MCF 10A (cell line): ENCODE measurements at regions of chr3 and their contacts with region 1.

Region 1: DNA sequence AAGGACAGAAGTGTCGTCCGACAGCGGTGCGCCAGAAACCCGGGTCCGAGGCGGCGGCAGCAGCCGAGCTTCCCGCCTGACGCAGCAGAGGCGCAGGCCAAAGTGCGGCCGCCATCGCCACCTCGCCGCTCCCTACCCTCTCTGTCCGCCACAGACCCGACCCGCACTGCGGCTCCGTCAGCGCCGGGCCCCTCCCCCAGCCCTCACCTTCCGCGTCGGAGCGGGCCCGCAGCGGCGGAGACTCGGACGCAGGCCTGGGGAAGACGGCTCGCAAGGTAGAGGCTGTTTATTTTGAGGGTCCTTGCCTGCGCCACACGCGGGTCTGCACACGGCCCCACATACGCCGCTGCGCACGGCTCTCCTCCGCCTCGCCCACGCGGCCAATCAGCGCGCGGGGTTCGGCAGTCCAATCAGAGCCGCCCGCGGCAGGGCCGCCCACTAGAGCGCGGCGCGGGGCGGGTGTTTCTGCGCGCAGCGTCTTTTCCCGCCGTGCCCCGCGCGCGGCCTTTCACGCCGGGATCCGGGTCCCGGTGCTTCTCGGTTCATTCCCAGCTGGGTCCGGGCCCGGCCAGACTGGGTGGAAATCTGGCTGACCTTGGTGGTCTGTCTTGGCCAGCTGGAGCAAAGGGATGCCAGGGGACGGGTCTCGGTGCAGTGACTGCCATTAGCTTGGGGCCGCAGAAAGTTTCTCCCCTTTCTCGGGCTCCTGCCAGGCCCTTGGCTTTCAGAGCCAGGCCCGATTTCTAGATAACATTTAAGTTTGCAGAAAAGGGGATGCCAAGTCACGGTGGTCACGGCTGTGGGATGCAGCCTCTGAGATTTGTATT is at the start of gene CNBP:
- DNase-seq: peak; percentile 95
- H3K4me3 Mint-ChIP-seq: peak within 1 kb of the TSS; percentile 84
- H3K27ac Mint-ChIP-seq: peak within 1 kb of the TSS; percentile 96
- H3K4me1 Mint-ChIP-seq: peaks cover 13% of the 10 kb centered on the region
- H3K27me3 Mint-ChIP-seq: no peaks in the 10 kb centered on the region
- CTCF ChIP-seq: no peak
- total RNA-seq, gene CNBP: 519 and 557 TPM in 2 replicates

Region 2: DNA sequence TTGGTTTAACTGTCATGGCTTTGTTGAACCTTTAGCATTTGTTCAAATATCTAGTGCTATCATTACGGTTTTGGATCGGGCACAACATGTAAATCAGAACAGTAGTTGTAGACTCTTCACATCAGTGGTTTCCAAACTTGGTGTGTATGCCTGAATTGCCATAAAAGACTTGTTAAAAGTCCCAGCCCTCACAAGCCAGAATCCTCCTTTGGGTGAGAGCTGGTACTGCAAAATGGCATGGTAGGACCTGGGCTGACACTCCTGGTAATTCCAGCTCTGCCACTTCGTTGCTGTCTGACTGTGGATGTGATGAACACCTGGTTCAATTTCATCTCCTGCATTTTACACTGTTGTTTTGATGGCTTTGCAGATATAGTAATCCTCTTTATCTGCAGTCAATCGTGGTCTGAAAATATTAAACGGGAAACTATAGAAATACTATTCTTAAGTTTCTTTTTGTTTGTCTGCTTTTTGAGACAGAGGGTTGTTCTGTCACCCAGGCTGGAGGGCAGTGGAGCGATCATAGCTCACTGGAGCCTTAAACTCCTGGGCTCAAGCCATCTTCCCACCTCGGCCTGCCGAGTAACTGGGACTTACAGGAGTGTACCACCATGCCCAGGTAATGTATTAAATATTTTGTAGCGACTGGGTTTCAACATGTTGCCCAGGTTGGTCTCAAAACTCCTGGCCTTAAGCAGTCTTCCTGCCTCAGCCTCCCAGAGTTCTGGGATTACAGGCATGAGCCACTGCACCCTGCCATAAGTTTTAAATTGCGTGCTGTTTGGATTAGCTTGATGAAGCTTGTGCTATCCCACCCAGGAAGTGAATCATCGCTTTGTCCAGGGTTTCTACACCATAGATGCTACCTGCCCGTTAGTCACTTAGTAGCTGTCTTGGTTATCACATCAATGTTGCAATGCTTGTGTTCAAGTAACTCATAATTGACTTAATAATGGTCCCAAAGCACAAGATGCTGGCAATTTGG is 396.2 kb before region 1 on chr3:
- CTCF ChIA-PET with region 1: no interaction called
- POLR2A ChIA-PET with region 1: no interaction called
- intact Hi-C with region 1: no loop called
- DNase-seq: peak; percentile 94
- H3K4me3 Mint-ChIP-seq: peak overlapping the region; percentile 5
- H3K27ac Mint-ChIP-seq: peak overlapping the region; percentile 80
- H3K4me1 Mint-ChIP-seq: peaks cover 42% of the 10 kb centered on the region
- H3K27me3 Mint-ChIP-seq: no peaks in the 10 kb centered on the region
- CTCF ChIP-seq: peak; percentile 36

Region 3: DNA sequence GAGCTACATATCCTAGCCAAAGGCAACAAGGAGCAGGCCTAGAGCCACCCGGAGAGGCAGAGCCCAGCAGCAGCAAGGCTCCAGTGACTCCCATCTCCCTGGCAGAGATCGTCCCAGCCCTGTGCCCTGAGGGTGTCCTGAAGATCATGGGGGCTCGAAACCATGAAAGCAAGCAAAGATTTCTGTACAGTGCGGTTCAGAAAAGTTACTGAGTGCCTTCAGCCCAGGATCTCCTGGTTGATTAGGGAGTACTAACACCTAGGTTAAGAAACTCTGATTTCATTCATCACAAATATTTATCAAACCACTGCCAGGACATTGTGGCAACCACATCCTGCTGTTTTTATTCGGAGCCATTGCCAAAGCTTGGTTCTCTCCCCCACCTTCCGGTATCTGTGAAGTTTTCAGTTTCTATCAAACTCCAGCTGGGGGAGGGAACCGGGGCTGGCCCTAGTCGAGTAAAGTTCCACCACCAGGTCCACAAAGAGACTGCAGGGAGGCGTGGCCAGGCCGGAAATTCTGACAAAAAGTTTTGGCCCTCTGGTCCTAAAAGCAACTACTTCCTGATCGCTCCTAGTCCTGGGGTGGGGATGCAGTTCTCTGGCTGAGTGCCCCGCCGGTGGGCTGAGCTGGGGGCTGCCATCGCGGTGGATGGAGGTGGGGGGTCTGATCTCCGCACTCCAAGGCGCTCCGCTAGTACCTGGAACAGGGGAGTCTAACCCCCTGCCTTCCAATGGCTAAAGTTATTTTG is 63.4 kb before region 1 on chr3:
- CTCF ChIA-PET with region 1: no interaction called
- POLR2A ChIA-PET with region 1: interaction called, 10 read pairs
- intact Hi-C with region 1: no loop called
- DNase-seq: peak; percentile 98
- H3K4me3 Mint-ChIP-seq: peak overlapping the region; percentile 77
- H3K27ac Mint-ChIP-seq: peak overlapping the region; percentile 82
- H3K4me1 Mint-ChIP-seq: peaks cover 26% of the 10 kb centered on the region
- H3K27me3 Mint-ChIP-seq: no peaks in the 10 kb centered on the region
- CTCF ChIP-seq: no peak

Region 4: DNA sequence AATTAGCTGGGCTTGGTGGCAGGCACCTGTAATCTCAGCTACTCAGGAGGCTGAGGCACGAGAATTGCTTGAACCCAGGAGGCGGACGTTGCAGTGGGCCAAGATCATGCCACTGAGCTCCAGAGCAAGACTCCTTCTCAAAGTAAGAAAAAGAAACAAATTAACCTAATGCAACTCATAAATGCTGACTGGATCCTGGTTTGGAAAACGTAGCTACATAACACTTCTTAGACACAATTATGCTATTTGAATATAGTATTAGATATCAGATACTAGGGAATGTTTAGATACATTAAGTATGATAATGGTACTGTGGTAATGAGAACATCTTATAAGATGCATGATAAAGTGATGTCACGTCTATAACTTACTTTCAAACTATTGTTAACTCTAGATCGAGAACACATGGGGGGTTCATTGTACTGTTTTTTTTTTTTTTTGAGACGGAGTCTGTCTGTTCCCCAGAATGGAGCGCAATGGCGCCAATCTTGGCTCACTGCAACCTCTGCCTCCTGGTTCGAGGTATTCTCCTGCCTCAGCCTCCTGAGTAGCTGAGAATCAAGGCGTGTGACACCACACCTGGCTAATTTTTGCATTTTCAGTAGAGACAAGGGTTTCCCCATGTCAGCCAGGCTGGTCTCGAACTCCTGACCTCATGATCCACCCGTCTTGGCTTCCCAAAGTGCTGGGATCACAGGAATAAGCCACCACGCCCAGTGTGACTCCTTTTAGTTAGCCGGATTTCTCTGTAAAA is 17.0 kb before region 1 on chr3:
- CTCF ChIA-PET with region 1: interaction called, 16 read pairs
- POLR2A ChIA-PET with region 1: interaction called, 82 read pairs
- intact Hi-C with region 1: no loop called
- DNase-seq: no peak
- H3K4me3 Mint-ChIP-seq: no peak overlapping the region
- H3K27ac Mint-ChIP-seq: no peak overlapping the region
- H3K4me1 Mint-ChIP-seq: peaks cover 17% of the 10 kb centered on the region
- H3K27me3 Mint-ChIP-seq: no peaks in the 10 kb centered on the region
- CTCF ChIP-seq: no peak

Region 5: GRCh38 chr3:129211772-129212171 is 28.0 kb after region 1 on chr3:
- CTCF ChIA-PET with region 1: interaction called, 4 read pairs
- POLR2A ChIA-PET with region 1: interaction called, 25 read pairs
- intact Hi-C with region 1: loop called (anchors 1 kb)
- DNase-seq: peak; percentile 98
- H3K4me3 Mint-ChIP-seq: peak overlapping the region; percentile 12
- H3K27ac Mint-ChIP-seq: peak overlapping the region; percentile 63
- H3K4me1 Mint-ChIP-seq: peaks cover 12% of the 10 kb centered on the region
- H3K27me3 Mint-ChIP-seq: no peaks in the 10 kb centered on the region
- CTCF ChIP-seq: no peak

Region 6: GRCh38 chr3:129233538-129233937 is 49.8 kb after region 1 on chr3:
- CTCF ChIA-PET with region 1: interaction called, 4 read pairs
- POLR2A ChIA-PET with region 1: interaction called, 86 read pairs
- intact Hi-C with region 1: no loop called
- DNase-seq: no peak
- H3K4me3 Mint-ChIP-seq: no peak overlapping the region
- H3K27ac Mint-ChIP-seq: no peak overlapping the region
- H3K4me1 Mint-ChIP-seq: peaks cover 28% of the 10 kb centered on the region
- H3K27me3 Mint-ChIP-seq: no peaks in the 10 kb centered on the region
- CTCF ChIP-seq: no peak

Region 7: GRCh38 chr3:129316131-129317013 is 132.6 kb after region 1 on chr3:
- CTCF ChIA-PET with region 1: interaction called, 3 read pairs
- POLR2A ChIA-PET with region 1: interaction called, 22 read pairs
- intact Hi-C with region 1: no loop called
- DNase-seq: peak; percentile 82
- H3K4me3 Mint-ChIP-seq: peak overlapping the region; percentile 81
- H3K27ac Mint-ChIP-seq: peak overlapping the region; percentile 87
- H3K4me1 Mint-ChIP-seq: peaks cover 6% of the 10 kb centered on the region
- H3K27me3 Mint-ChIP-seq: no peaks in the 10 kb centered on the region
- CTCF ChIP-seq: peak; percentile 49